Ascending aorta (tissue), 2 donors: ENCODE measurements at regions of chr3 and their contacts with region 1.

Region 1: DNA sequence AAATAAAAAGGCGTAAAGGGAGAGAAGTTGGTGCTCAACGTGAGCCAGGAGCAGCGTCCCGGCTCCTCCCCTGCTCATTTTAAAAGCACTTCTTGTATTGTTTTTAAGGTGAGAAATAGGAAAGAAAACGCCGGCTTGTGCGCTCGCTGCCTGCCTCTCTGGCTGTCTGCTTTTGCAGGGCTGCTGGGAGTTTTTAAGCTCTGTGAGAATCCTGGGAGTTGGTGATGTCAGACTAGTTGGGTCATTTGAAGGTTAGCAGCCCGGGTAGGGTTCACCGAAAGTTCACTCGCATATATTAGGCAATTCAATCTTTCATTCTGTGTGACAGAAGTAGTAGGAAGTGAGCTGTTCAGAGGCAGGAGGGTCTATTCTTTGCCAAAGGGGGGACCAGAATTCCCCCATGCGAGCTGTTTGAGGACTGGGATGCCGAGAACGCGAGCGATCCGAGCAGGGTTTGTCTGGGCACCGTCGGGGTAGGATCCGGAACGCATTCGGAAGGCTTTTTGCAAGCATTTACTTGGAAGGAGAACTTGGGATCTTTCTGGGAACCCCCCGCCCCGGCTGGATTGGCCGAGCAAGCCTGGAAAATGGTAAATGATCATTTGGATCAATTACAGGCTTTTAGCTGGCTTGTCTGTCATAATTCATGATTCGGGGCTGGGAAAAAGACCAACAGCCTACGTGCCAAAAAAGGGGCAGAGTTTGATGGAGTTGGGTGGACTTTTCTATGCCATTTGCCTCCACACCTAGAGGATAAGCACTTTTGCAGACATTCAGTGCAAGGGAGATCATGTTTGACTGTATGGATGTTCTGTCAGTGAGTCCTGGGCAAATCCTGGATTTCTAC is at the start of gene RARB:
- DNase-seq: peak in 1 of 2 donors; percentile 84
- H3K4me3 ChIP-seq: peak within 1 kb of the TSS; percentile 70
- H3K27ac ChIP-seq: peak within 1 kb of the TSS; percentile 76 to 93
- H3K4me1 ChIP-seq: peaks cover 0 to 3% of the 10 kb centered on the region in 2 donors
- H3K27me3 ChIP-seq: no peaks in the 10 kb centered on the region
- CTCF ChIP-seq: no peak
- total RNA-seq, gene RARB: 52.7 TPM

Region 2: GRCh38 chr3:25156626-25157025 is 271.5 kb before region 1 on chr3:
- intact Hi-C with region 1: loop called (anchors 10 kb)
- DNase-seq: no peak
- H3K4me3 ChIP-seq: peak overlapping the region in 1 of 2 donors; percentile 5
- H3K27ac ChIP-seq: peak overlapping the region in 1 of 2 donors; percentile 46
- H3K4me1 ChIP-seq: peaks cover 0 to 4% of the 10 kb centered on the region in 2 donors
- H3K27me3 ChIP-seq: no peaks in the 10 kb centered on the region
- CTCF ChIP-seq: no peak

Region 3: GRCh38 chr3:25468866-25469319 is 40.7 kb after region 1 on chr3:
- intact Hi-C with region 1: loop called (anchors 5 kb)
- DNase-seq: peak in 1 of 2 donors; percentile 82
- H3K4me3 ChIP-seq: peak overlapping the region in 1 of 2 donors; percentile 8
- H3K27ac ChIP-seq: peak overlapping the region; percentile 59 to 83
- H3K4me1 ChIP-seq: peaks cover 5 to 14% of the 10 kb centered on the region in 2 donors
- H3K27me3 ChIP-seq: no peaks in the 10 kb centered on the region
- CTCF ChIP-seq: peak; percentile 9 to 16 (median 16)

Region 4: GRCh38 chr3:25508901-25509300 is 80.7 kb after region 1 on chr3:
- intact Hi-C with region 1: loop called (anchors 5 kb)
- DNase-seq: no peak
- H3K4me3 ChIP-seq: no peak overlapping the region
- H3K27ac ChIP-seq: peak overlapping the region; percentile 43 to 87
- H3K4me1 ChIP-seq: peaks cover 0 to 19% of the 10 kb centered on the region in 2 donors
- H3K27me3 ChIP-seq: no peaks in the 10 kb centered on the region
- CTCF ChIP-seq: no peak